Esophagus muscularis mucosa (tissue), 4 donors: ENCODE measurements at regions of chr16 and their contacts with region 1.

Region 1: GRCh38 chr16:89860747-89861304 is 12.6 kb upstream of the TCF25 start:
- DNase-seq: no peak
- H3K4me3 ChIP-seq: no peak overlapping the region
- H3K27ac ChIP-seq: no peak overlapping the region
- H3K4me1 ChIP-seq: peaks cover 13 to 19% (median 15%) of the 10 kb centered on the region in 4 donors
- H3K27me3 ChIP-seq: no peaks in the 10 kb centered on the region
- CTCF ChIP-seq: peak; percentile 94 to 100 (median 96)
- EP300 ChIP-seq: no peak
- POLR2A ChIP-seq: no peak

Region 2: DNA sequence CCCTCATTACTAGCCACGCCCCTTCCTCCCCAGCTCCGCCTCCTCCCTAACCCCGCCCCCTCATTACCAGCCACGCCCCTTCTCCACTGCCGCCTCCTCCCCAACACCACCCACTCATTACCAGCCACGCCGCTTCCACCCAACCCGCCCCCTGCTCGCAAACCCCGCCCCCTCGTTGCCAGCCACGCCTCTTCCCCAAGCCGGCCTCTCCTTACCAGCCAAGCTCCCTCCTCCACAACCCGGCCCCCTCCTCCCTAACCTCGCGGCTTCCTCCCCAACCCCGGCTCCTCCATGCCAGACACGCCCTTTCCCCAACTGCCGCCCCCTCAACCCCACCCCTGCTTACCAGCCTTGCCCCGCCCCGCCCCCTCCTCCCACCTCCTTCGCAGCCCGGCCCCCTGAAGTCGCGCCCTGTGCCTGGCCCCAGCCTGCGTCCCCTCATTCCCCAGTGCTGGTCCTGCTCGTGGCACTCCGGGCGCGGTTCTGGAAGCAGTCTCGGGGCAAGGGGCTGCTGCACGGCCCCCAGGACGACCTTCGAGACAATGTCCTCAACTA is 667.7 kb before region 1 on chr16:
- intact Hi-C with region 1: no loop called
- DNase-seq: no peak
- H3K4me3 ChIP-seq: peak overlapping the region in 3 of 4 donors; percentile 33 to 56 (median 55)
- H3K27ac ChIP-seq: no peak overlapping the region
- H3K4me1 ChIP-seq: peaks cover 8 to 24% (median 23%) of the 10 kb centered on the region in 4 donors
- H3K27me3 ChIP-seq: peaks cover 0 to 25% (median 3%) of the 10 kb centered on the region in 4 donors
- CTCF ChIP-seq: no peak
- EP300 ChIP-seq: no peak
- POLR2A ChIP-seq: no peak

Region 3: DNA sequence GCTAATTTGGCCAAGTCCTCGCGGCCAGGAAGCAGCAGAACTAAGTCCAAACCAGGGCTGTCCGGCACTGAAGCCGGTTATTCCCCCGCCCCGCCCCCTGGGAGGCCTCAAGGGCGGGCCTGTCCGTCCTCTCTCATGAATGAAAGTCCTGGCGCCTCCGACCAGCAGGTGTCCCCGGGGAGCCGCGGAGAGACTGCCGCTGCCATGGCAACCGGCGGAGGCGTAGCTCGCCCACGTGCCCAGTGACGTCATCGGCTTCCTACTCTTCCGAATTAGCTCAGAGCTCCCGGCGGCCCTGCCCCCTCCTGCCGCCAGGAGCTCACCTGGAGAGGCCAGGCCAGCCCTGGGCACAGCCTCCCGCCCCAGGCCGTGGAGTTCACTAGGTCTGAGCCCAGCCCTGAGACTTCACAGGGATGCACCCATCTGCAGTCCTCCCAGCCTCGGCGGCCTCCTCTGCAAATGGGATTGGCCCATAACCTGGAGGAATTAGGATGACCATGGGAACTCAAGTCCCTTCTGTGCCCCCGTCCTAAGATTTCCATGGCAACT is 160.7 kb before region 1 on chr16:
- intact Hi-C with region 1: loop called (anchors 10 kb)
- DNase-seq: peak; percentile 100
- H3K4me3 ChIP-seq: peak overlapping the region; percentile 73 to 94 (median 82)
- H3K27ac ChIP-seq: peak overlapping the region; percentile 74 to 86 (median 80)
- H3K4me1 ChIP-seq: peaks cover 15 to 32% (median 30%) of the 10 kb centered on the region in 4 donors
- H3K27me3 ChIP-seq: no peaks in the 10 kb centered on the region
- CTCF ChIP-seq: peak; percentile 69 to 88 (median 82)
- EP300 ChIP-seq: no peak
- POLR2A ChIP-seq: no peak

Region 4: DNA sequence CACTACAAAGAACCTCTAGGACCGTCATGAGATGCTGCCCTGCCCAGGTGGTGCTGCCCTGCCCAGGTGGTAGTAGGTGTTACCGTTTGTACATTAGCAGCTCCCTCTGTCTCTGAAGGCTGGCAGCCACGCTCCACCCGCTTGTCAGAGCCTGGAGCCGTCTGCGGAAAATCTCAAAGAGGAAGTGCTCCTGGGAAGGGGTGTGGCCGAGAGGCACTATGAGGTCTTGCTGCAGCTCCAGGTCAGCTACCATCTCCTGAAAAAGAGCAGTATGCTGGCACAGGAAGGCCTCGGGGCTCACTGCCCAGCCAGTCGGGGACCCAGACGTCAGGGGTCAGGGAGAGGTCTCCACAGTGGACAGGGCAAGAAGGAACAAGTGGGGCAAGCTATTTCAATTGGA is 111.2 kb before region 1 on chr16:
- intact Hi-C with region 1: loop called (anchors 5 kb)
- DNase-seq: no peak
- H3K4me3 ChIP-seq: no peak overlapping the region
- H3K27ac ChIP-seq: no peak overlapping the region
- H3K4me1 ChIP-seq: no peaks in the 10 kb centered on the region
- H3K27me3 ChIP-seq: no peaks in the 10 kb centered on the region
- CTCF ChIP-seq: no peak
- EP300 ChIP-seq: no peak
- POLR2A ChIP-seq: no peak

Region 5: DNA sequence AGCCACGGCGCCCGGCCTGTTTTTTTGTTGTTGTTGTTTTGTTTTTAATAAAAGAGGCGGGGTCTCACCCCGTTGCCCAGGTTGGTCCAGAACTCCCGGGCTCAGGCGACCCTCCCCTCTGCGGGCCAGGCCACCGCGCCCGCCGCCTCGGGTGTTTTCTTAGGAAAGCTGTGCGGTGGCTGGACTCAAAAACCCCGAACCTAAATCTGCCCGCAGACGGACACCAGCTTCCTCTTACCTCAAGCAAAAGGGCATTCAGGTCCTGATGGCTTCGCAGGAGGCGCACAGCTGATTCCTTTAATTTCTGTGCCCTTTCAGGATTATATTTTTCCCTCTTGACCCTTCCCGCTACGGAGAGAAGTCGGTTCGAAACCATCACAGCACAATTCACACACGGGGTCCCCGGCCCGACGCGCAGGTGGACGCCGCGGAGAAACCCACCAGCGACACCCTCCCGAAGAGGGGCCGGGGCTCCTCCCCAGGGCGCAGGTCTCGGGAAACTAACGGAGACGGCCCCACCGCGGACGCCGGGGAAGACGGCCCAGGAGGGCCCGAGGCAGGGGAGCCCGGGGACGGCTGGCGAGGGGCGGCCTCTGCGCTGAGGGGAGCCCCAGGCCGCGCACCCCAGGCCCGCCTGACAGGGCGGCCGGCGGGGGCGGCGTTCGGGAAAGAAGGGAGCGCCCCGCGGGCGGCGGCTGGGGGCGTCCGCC is 45.0 kb before region 1 on chr16:
- intact Hi-C with region 1: loop called (anchors 10 kb)
- DNase-seq: no peak
- H3K4me3 ChIP-seq: peak overlapping the region; percentile 57 to 90 (median 74)
- H3K27ac ChIP-seq: peak overlapping the region in 2 of 4 donors; percentile 84 to 89
- H3K4me1 ChIP-seq: peaks cover 15 to 35% (median 21%) of the 10 kb centered on the region in 4 donors
- H3K27me3 ChIP-seq: peaks cover 0 to 19% (median 0%) of the 10 kb centered on the region in 4 donors
- CTCF ChIP-seq: no peak
- EP300 ChIP-seq: no peak
- POLR2A ChIP-seq: no peak